ENCODE measurements at regions of chr21 and their contacts with region 1.

Region 1: GRCh38 chr21:25607151-25608043 is at the start of gene MRPL39:
- DNase-seq: peak; percentile 89
- H3K4me3 Mint-ChIP-seq: peak within 1 kb of the TSS; percentile 95
- H3K27ac Mint-ChIP-seq: peak within 1 kb of the TSS; percentile 98
- H3K4me1 Mint-ChIP-seq: peaks cover 34% of the 10 kb centered on the region
- H3K27me3 Mint-ChIP-seq: no peaks in the 10 kb centered on the region
- total RNA-seq, gene MRPL39: 36.5 to 37.8 TPM

Region 2: GRCh38 chr21:24514081-24514733 is 1093.2 kb before region 1 on chr21:
- CTCF ChIA-PET with region 1: no interaction called
- POLR2A ChIA-PET with region 1: no interaction called
- DNase-seq: no peak
- H3K4me3 Mint-ChIP-seq: no peak overlapping the region
- H3K27ac Mint-ChIP-seq: no peak overlapping the region
- H3K4me1 Mint-ChIP-seq: no peaks in the 10 kb centered on the region
- H3K27me3 Mint-ChIP-seq: no peaks in the 10 kb centered on the region

Region 3: GRCh38 chr21:25409978-25410377 is 197.4 kb before region 1 on chr21:
- CTCF ChIA-PET with region 1: no interaction called
- POLR2A ChIA-PET with region 1: no interaction called
- DNase-seq: no peak
- H3K4me3 Mint-ChIP-seq: no peak overlapping the region
- H3K27ac Mint-ChIP-seq: no peak overlapping the region
- H3K4me1 Mint-ChIP-seq: peaks cover 9% of the 10 kb centered on the region
- H3K27me3 Mint-ChIP-seq: no peaks in the 10 kb centered on the region

Region 4: GRCh38 chr21:25421327-25422028 is 185.9 kb before region 1 on chr21:
- CTCF ChIA-PET with region 1: interaction called, 28 read pairs
- POLR2A ChIA-PET with region 1: no interaction called
- DNase-seq: peak; percentile 68
- H3K4me3 Mint-ChIP-seq: peak overlapping the region; percentile 65
- H3K27ac Mint-ChIP-seq: peak overlapping the region; percentile 82
- H3K4me1 Mint-ChIP-seq: peaks cover 41% of the 10 kb centered on the region
- H3K27me3 Mint-ChIP-seq: no peaks in the 10 kb centered on the region

Region 5: GRCh38 chr21:25528510-25528909 is 78.9 kb before region 1 on chr21:
- CTCF ChIA-PET with region 1: no interaction called
- POLR2A ChIA-PET with region 1: no interaction called
- DNase-seq: no peak
- H3K4me3 Mint-ChIP-seq: no peak overlapping the region
- H3K27ac Mint-ChIP-seq: no peak overlapping the region
- H3K4me1 Mint-ChIP-seq: no peaks in the 10 kb centered on the region
- H3K27me3 Mint-ChIP-seq: no peaks in the 10 kb centered on the region

Region 6: GRCh38 chr21:25561668-25562641 is 45.4 kb before region 1 on chr21:
- CTCF ChIA-PET with region 1: no interaction called
- POLR2A ChIA-PET with region 1: interaction called, 14 read pairs
- DNase-seq: peak; percentile 79
- H3K4me3 Mint-ChIP-seq: peak overlapping the region; percentile 92
- H3K27ac Mint-ChIP-seq: peak overlapping the region; percentile 96
- H3K4me1 Mint-ChIP-seq: peaks cover 68% of the 10 kb centered on the region
- H3K27me3 Mint-ChIP-seq: no peaks in the 10 kb centered on the region

Region 7: GRCh38 chr21:25639551-25640201 is 32.3 kb after region 1 on chr21:
- CTCF ChIA-PET with region 1: interaction called, 18 read pairs
- POLR2A ChIA-PET with region 1: no interaction called
- DNase-seq: peak; percentile 34
- H3K4me3 Mint-ChIP-seq: peak overlapping the region; percentile 72
- H3K27ac Mint-ChIP-seq: no peak overlapping the region
- H3K4me1 Mint-ChIP-seq: peaks cover 32% of the 10 kb centered on the region
- H3K27me3 Mint-ChIP-seq: peaks cover 47% of the 10 kb centered on the region

Region 8: GRCh38 chr21:25708467-25709065 is 101.2 kb after region 1 on chr21:
- CTCF ChIA-PET with region 1: interaction called, 20 read pairs
- POLR2A ChIA-PET with region 1: interaction called, 3 read pairs
- DNase-seq: peak; percentile 41
- H3K4me3 Mint-ChIP-seq: no peak overlapping the region
- H3K27ac Mint-ChIP-seq: no peak overlapping the region
- H3K4me1 Mint-ChIP-seq: no peaks in the 10 kb centered on the region
- H3K27me3 Mint-ChIP-seq: no peaks in the 10 kb centered on the region

Region 9: GRCh38 chr21:25734904-25735645 is 127.7 kb after region 1 on chr21 and contains the starts of genes ATP5PF and GABPA:
- CTCF ChIA-PET with region 1: interaction called, 12 read pairs
- POLR2A ChIA-PET with region 1: interaction called, 44 read pairs
- DNase-seq: peak; percentile 97
- H3K4me3 Mint-ChIP-seq: peak within 1 kb of the TSS; percentile 98
- H3K27ac Mint-ChIP-seq: peak within 1 kb of the TSS; percentile 100
- H3K4me1 Mint-ChIP-seq: peaks cover 48% of the 10 kb centered on the region
- H3K27me3 Mint-ChIP-seq: no peaks in the 10 kb centered on the region
- total RNA-seq, gene ATP5PF: 109 to 118 TPM
- total RNA-seq, gene GABPA: 25.6 to 27.7 TPM

Region 10: GRCh38 chr21:25801217-25802014 is 194.0 kb after region 1 on chr21:
- CTCF ChIA-PET with region 1: interaction called, 13 read pairs
- POLR2A ChIA-PET with region 1: interaction called, 3 read pairs
- DNase-seq: peak; percentile 88
- H3K4me3 Mint-ChIP-seq: no peak overlapping the region
- H3K27ac Mint-ChIP-seq: no peak overlapping the region
- H3K4me1 Mint-ChIP-seq: peaks cover 6% of the 10 kb centered on the region
- H3K27me3 Mint-ChIP-seq: peaks cover 19% of the 10 kb centered on the region